Lower leg skin (tissue), 4 donors: ENCODE measurements at regions of chr1 and their contacts with region 1.

Region 1: DNA sequence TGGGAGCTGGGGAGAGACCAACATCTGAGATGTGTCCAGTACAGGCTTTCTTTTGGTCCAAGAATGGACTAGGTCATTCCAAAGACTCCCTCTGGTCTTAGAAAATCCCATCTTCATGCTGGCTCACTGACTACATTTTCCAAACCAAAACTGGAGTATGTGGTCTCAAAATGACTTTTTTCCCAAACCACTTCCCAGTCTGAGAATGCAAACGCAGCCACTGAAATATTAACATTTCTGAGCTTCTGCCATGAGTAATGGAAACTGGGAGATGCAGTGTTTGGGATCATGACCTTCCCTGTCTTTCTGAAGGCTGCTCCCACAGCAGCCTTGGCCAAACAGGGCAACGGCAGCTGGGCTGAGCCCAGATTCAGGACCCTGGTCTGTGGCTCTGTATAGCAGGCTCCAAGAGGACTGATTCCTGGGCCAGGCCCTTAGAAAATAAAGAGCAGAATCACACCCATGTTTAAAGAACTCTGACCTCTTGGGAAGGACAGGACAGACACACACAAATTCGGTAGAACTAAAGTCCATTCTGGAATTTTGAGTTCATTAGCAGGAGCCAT is 62.1 kb upstream of the CNTN2 start:
- DNase-seq: no peak
- H3K4me3 ChIP-seq: no peak overlapping the region
- CTCF ChIP-seq: no peak
- POLR2A ChIP-seq: no peak

Region 2: DNA sequence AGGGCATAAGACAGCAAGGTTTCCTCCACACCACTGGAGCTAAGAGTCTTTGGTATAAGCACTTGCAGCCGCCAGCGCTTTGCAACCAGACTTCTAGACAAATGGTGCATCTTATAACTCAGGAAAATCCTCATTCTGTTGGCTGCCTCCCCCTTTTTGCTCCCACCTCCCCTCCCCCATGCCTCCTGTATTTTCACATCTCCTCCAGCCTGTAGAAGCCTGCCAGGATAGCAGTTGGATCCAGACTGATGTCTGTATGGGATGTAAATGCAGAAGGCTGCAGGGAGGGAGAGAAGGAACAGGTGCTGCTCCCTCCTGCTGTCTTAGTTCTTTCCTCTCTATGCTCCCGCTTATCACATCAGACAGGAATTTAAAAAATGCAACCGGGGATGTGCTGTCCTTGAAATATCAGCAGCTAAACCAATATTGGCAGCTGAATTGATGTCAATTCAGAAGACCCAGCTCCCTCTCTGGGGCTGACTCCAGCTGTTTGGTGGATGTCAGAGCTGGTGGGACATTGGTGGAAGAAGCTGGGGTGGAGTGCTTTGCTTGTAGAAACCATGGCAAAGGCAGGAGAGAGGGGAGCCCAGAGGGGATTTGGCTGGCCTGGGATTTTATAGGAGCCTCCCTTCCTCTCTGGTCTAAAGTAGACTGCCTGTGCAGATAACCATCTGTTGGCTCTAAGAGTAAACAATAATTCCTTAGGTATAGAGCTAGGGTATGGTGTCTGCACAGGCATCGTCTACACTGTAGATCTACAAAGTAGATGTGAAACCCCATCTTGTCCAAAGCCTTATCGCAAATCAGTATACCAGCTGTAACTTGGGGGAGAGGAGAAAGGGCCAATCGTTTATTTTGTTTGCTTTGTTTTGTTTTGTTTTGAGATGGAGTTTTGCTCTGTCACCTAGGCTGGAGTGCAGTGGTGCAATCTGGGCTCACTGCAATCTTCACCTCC is 56.6 kb before region 1 on chr1:
- intact Hi-C with region 1: no loop called
- DNase-seq: peak in 1 of 2 donors; percentile 58
- H3K4me3 ChIP-seq: no peak overlapping the region
- CTCF ChIP-seq: no peak
- POLR2A ChIP-seq: no peak

Region 3: GRCh38 chr1:205129447-205130029 is 148.6 kb after region 1 on chr1:
- intact Hi-C with region 1: loop called (anchors 5 kb)
- DNase-seq: no peak
- H3K4me3 ChIP-seq: no peak overlapping the region
- CTCF ChIP-seq: no peak
- POLR2A ChIP-seq: no peak

Region 4: DNA sequence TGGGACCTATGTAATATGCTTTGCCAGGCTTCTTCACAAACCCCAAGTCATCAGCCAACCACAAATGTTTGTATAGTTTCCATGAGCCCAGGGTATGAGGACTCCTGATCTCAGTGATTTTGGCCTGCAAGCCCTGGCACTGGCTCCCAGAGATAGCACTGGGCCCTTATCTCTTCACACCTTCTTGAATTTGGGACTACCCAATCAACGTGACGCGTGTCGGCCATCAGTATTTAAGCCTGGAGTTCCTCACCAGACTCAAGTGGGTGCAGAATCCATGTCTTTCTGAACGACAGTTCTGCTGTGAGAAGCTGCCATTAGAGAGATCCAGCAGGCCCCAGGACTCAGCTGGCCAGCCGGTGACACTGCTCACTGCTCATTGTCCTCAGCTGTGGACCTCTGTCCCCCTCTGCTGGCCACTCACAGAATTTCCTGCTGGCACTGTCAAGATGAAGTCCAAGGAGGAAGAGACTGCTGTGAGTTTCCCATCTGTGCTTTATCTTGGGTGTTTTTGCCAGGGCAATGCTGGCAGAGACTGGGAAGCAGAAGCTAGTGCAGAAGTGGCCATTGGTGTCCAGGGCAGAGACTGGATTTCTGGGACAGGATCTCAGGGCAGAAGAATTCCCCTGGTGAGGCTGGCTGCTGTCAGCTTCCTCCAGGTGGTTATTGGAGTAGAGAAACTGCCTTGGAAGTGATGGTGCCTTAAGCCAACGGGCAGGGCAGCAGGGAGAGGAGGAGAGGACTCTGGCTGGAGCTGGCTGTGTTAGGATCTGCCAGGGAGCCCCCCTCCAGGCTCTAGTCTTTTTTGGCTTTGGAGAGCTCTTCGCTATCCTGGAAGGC is 275.2 kb after region 1 on chr1:
- intact Hi-C with region 1: loop called (anchors 2 kb)
- DNase-seq: peak; percentile 89 to 98
- H3K4me3 ChIP-seq: no peak overlapping the region
- CTCF ChIP-seq: peak in 1 of 3 donors; percentile 93
- POLR2A ChIP-seq: no peak